OCI-LY7 (cell line): ENCODE measurements at regions of chr1 and their contacts with region 1.

Region 1: GRCh38 chr1:117054068-117054467 is 6.1 kb upstream of the TTF2 start:
- DNase-seq: no peak
- H3K4me3 ChIP-seq: no peak overlapping the region
- H3K27ac ChIP-seq: no peak overlapping the region
- H3K4me1 ChIP-seq: peaks cover 28% of the 10 kb centered on the region
- CTCF ChIP-seq: no peak

Region 2: GRCh38 chr1:116574581-116575291 is 479.3 kb before region 1 on chr1:
- CTCF ChIA-PET with region 1: no interaction called
- POLR2A ChIA-PET with region 1: no interaction called
- intact Hi-C with region 1: loop called (anchors 2 kb)
- DNase-seq: peak; percentile 66
- H3K4me3 ChIP-seq: no peak overlapping the region
- H3K27ac ChIP-seq: no peak overlapping the region
- H3K4me1 ChIP-seq: no peaks in the 10 kb centered on the region
- CTCF ChIP-seq: peak; percentile 97

Region 3: GRCh38 chr1:116724765-116725375 is 329.2 kb before region 1 on chr1:
- CTCF ChIA-PET with region 1: no interaction called
- POLR2A ChIA-PET with region 1: interaction called, 6 read pairs
- intact Hi-C with region 1: loop called (anchors 2 kb)
- DNase-seq: peak; percentile 81
- H3K4me3 ChIP-seq: no peak overlapping the region
- H3K27ac ChIP-seq: no peak overlapping the region
- H3K4me1 ChIP-seq: peaks cover 9% of the 10 kb centered on the region
- CTCF ChIP-seq: peak; percentile 98